Calu3 (cell line): ENCODE measurements at regions of chrX and their contacts with region 1.

Region 1: DNA sequence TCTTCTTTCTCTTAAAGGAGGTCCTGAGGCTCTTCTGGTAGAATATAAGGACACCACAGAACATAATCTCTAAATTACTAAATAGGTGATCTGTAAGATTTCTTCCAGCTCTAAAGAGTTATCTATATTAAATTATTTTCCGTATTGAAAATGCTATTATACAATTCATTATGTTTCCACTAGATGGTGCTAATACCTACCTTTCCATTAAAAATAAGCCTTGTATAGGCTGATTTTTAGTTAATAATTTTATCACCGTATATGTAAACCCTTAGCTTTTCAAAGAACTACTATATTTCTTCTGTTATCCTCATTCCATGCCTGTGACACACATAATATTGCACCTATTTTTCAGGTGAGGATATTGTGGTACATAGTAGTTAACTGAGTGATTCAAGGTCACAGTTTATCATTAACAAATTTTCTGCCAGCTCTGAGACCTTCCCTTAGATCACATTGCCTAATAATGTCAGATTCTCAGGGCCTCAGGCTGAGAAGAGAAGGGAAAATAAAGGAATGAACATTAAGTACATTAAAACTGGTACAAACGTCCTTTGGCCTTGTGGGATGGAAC is 138.8 kb downstream of the TEX11 start:
- DNase-seq: no peak
- H3K4me3 Mint-ChIP-seq: no peak overlapping the region
- H3K27ac Mint-ChIP-seq: no peak overlapping the region
- H3K4me1 Mint-ChIP-seq: no peaks in the 10 kb centered on the region
- H3K27me3 Mint-ChIP-seq: peaks cover 13% of the 10 kb centered on the region
- CTCF ChIP-seq: no peak

Region 2: DNA sequence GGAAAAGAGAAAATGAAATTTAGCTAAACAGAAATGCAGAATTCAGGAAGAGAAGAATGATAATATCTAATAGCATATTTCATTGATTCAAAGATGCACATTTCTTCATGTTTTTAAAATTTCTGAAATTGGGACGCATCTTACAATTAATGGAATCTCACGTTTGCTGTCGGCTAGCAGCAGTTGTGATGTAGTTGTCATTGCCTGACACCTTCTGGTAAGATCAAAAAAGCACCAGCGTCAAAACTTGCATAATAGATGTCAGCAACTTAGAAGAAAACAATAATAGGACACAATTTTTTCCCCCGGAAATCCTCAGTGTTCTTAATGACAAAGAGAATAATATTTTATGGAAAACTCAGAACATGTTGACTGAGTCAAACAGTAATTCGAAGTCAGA is 191.0 kb after region 1 on chrX:
- CTCF ChIA-PET with region 1: interaction called, 3 read pairs
- intact Hi-C with region 1: loop called (anchors 2 kb)
- DNase-seq: no peak
- H3K4me3 Mint-ChIP-seq: no peak overlapping the region
- H3K27ac Mint-ChIP-seq: no peak overlapping the region
- H3K4me1 Mint-ChIP-seq: no peaks in the 10 kb centered on the region
- H3K27me3 Mint-ChIP-seq: peaks cover 46% of the 10 kb centered on the region
- CTCF ChIP-seq: no peak

Region 3: GRCh38 chrX:70978928-70979762 is 209.4 kb after region 1 on chrX:
- CTCF ChIA-PET with region 1: no interaction called
- intact Hi-C with region 1: loop called (anchors 5 kb)
- DNase-seq: peak; percentile 1
- H3K4me3 Mint-ChIP-seq: no peak overlapping the region
- H3K27ac Mint-ChIP-seq: no peak overlapping the region
- H3K4me1 Mint-ChIP-seq: no peaks in the 10 kb centered on the region
- H3K27me3 Mint-ChIP-seq: peaks cover 14% of the 10 kb centered on the region
- CTCF ChIP-seq: no peak

Region 4: DNA sequence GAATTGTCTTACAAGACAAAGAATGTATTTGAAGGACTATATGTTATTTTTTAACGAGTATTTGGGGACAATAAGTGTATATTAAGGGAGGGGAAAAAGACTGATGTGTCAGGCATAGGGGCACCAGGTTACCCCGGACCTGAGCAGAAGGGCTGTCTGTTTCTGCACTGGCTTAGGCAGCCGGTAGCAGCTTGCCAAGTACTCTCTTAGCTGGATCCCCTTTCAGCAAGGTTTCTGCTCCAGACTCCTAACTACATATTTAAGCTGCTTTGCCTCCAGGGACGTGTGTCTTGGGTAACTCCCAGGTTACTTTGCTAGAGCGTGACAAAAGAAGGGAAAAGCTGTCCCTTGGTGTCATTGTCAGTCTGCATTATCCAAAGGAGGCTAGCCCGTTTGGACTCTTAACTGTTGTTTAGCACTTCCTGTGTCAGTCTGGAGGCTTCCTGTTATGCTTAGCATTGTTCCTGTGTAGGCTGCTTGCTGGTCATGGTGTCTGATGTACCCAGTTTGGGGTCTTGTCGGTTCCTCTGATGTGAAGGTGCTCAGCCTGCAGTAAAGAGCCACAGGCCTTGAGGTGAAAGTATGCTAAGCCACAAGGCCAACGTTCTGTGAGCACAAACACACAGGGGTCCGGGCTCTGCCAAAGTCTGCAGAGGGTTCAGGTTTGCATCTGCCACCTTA is 836.9 kb after region 1 on chrX:
- CTCF ChIA-PET with region 1: no interaction called
- intact Hi-C with region 1: no loop called
- DNase-seq: no peak
- H3K4me3 Mint-ChIP-seq: no peak overlapping the region
- H3K27ac Mint-ChIP-seq: no peak overlapping the region
- H3K4me1 Mint-ChIP-seq: no peaks in the 10 kb centered on the region
- H3K27me3 Mint-ChIP-seq: no peaks in the 10 kb centered on the region
- CTCF ChIP-seq: no peak